Stomach (tissue), 19 donors: ENCODE measurements at regions of chr19 and their contacts with region 1.

Region 1: GRCh38 chr19:42244347-42245220 is 2.2 kb upstream of the GSK3A start:
- DNase-seq: peak; percentile 92 to 98
- H3K4me3 ChIP-seq: peak overlapping the region; percentile 88 to 96 (median 92)
- H3K27ac ChIP-seq: peak overlapping the region; percentile 88 to 97 (median 94)
- H3K4me1 ChIP-seq: peaks cover 31 to 81% (median 59%) of the 10 kb centered on the region in 4 donors
- H3K27me3 ChIP-seq: no peaks in the 10 kb centered on the region
- CTCF ChIP-seq: peak in 5 of 7 experiments; percentile 18 to 78 (median 41)
- EP300 ChIP-seq: peak; percentile 21
- POLR2A ChIP-seq: no peak

Region 2: DNA sequence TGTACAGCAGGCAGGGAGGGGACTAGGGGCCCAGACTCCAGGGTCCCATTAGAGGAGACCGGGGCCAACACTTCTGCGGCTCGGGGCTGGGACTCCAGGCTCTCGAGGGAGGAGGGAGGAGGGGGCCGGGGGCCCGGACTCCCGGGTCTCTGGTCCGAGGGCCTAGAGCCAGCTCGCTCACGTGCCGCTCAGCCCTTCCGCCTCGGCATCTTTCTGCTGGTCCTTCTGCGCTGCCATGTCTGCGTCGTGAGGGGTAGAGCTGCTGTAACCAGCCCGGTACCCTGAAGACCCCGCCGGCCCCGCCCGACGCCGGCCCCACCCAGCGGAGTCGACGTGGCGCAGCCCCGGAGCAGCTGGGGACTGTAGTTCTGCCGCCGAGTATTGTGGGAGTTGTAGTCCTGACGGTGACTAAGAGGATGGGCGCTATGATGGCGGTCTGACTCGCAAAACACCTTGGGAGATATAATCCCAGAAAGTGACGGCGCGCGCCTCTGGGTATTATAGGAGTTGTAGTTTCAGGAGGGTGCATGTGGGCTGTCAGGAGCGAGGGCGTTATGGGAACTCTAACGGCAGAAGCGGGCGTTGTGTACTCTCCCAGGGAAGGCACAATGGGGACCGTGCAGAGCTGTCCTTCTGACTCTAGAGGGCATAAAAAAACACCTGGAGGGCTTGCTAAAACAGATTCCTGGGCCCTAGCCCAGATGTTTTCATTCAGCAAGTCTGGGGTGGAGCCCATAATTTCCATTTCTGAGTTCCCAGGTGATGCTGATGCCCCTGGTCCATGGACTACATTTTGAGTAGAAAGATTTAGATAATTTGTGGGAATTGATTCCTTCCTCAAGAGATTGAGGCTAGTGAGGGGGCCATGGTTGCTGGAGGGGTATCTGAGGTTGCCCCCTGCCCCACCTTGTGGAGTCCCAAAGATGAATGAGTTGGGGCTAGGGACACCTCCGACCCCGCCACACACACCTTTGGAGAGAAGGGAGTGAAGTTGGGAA is 285.2 kb before region 1 on chr19 and contains the start of gene RABAC1:
- intact Hi-C with region 1: loop called (anchors 5 kb)
- DNase-seq: peak; percentile 89 to 98
- H3K4me3 ChIP-seq: peak within 1 kb of the TSS; percentile 83 to 92 (median 90)
- H3K27ac ChIP-seq: peak within 1 kb of the TSS; percentile 92 to 97 (median 96)
- H3K4me1 ChIP-seq: peaks cover 15 to 39% (median 24%) of the 10 kb centered on the region in 4 donors
- H3K27me3 ChIP-seq: no peaks in the 10 kb centered on the region
- CTCF ChIP-seq: no peak
- EP300 ChIP-seq: no peak
- POLR2A ChIP-seq: no peak
- total RNA-seq, gene RABAC1: 44.6 to 499 (median 114) TPM

Region 3: GRCh38 chr19:42176990-42177685 is 67.4 kb before region 1 on chr19:
- intact Hi-C with region 1: no loop called
- DNase-seq: peak; percentile 71 to 94
- H3K4me3 ChIP-seq: peak overlapping the region; percentile 50 to 58 (median 54)
- H3K27ac ChIP-seq: peak overlapping the region in 2 of 5 donors; percentile 8 to 42
- H3K4me1 ChIP-seq: peaks cover 12 to 23% (median 21%) of the 10 kb centered on the region in 4 donors
- H3K27me3 ChIP-seq: peaks cover 5 to 96% (median 63%) of the 10 kb centered on the region in 3 donors
- CTCF ChIP-seq: peak in 3 of 7 experiments; percentile 8 to 46 (median 21)
- EP300 ChIP-seq: no peak
- POLR2A ChIP-seq: no peak

Region 4: GRCh38 chr19:42284591-42285341 is 40.2 kb after region 1 on chr19:
- intact Hi-C with region 1: loop called (anchors 5 kb)
- DNase-seq: peak in 1 of 2 donors; percentile 60
- H3K4me3 ChIP-seq: peak overlapping the region; percentile 64 to 71 (median 68)
- H3K27ac ChIP-seq: peak overlapping the region; percentile 74 to 100 (median 97)
- H3K4me1 ChIP-seq: peaks cover 49 to 79% (median 63%) of the 10 kb centered on the region in 4 donors
- H3K27me3 ChIP-seq: no peaks in the 10 kb centered on the region
- CTCF ChIP-seq: no peak
- EP300 ChIP-seq: no peak
- POLR2A ChIP-seq: no peak